Left lung (tissue), 14 donors: ENCODE measurements at regions of chr5 and their contacts with region 1.

Region 1: GRCh38 chr5:1167728-1168709 is 33.4 kb upstream of the SLC6A19 start:
- DNase-seq: peak; percentile 46 to 83 (median 68)
- ATAC-seq: peak; percentile 90
- H3K4me3 ChIP-seq: no peak overlapping the region
- H3K27ac ChIP-seq: no peak overlapping the region
- H3K4me1 ChIP-seq: peaks cover 0 to 10% of the 10 kb centered on the region in 2 donors
- H3K27me3 ChIP-seq: peaks cover 0 to 8% of the 10 kb centered on the region in 2 donors
- CTCF ChIP-seq: peak; percentile 63 to 67

Region 2: DNA sequence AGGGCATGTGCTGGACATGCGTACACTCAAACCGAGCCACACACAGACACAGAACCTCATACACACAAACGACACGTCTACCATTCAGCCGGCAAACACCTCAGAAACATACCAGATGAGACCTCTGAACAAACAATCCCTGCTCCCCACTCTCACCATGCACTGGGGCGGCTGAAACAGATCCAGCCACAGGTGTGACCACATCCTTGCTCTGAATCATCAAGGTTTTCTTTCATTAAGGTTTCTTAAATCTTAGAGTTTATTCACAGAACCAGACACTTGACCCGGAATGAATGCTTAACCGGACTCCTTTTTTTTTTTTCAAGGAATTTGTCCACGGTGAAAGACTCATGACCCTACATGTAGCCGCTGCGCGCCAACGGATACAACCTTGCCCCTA is 100.6 kb after region 1 on chr5:
- intact Hi-C with region 1: no loop called
- DNase-seq: no peak
- ATAC-seq: no peak
- H3K4me3 ChIP-seq: no peak overlapping the region
- H3K27ac ChIP-seq: no peak overlapping the region
- H3K4me1 ChIP-seq: no peaks in the 10 kb centered on the region
- H3K27me3 ChIP-seq: no peaks in the 10 kb centered on the region
- CTCF ChIP-seq: no peak

Region 3: DNA sequence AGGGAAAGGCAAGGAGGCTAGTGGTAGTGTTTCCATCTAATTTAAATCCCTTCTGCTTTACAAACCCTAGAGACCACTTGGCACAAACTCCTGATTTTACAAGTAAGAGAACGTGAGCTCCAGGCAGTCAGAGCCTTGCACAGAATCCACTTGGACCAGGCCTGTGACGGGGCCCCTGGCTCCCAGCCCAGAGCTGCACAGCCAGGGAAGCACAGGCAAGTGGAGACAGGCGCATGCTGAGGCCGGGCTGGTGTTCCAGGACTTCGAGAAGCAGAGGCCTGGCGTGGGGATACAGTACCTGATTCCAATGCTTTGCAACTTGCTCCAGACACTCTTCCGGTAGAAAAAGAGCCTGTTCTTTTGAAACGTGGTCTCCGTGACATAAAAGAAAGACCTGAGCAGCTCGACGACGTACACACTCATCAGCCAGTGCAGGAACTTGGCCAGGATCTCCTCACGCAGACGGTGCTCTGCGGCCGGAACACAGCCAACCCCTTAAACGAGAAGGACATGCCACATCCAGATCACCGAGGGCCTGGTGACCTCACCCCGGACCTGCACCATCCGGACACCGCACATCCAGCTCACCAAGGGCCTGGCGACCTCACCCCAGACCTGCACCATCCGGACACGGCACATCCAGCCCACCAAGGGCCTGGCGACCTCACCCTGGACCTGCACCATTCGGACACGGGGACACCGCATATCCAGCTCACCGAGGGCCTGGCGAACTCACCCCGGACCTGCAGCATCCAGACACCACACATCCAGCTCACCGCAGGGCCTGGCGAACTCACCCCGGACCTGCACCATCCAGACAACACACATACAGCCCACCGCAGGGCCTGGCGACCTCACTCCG is 114.3 kb after region 1 on chr5:
- intact Hi-C with region 1: no loop called
- DNase-seq: peak in 3 of 4 donors; percentile 31 to 54 (median 44)
- ATAC-seq: peak; percentile 33
- H3K4me3 ChIP-seq: no peak overlapping the region
- H3K27ac ChIP-seq: no peak overlapping the region
- H3K4me1 ChIP-seq: no peaks in the 10 kb centered on the region
- H3K27me3 ChIP-seq: no peaks in the 10 kb centered on the region
- CTCF ChIP-seq: no peak

Region 4: GRCh38 chr5:1641560-1642166 is 473.6 kb after region 1 on chr5:
- intact Hi-C with region 1: loop called in 1 of 2 experiments (anchors 5 kb)
- DNase-seq: peak; percentile 67 to 84 (median 82)
- ATAC-seq: peak; percentile 90
- H3K4me3 ChIP-seq: no peak overlapping the region
- H3K27ac ChIP-seq: no peak overlapping the region
- H3K4me1 ChIP-seq: peaks cover 4 to 5% of the 10 kb centered on the region in 2 donors
- H3K27me3 ChIP-seq: peaks cover 27 to 61% of the 10 kb centered on the region in 2 donors
- CTCF ChIP-seq: peak; percentile 68 to 79

Region 5: GRCh38 chr5:1652596-1653345 is 484.8 kb after region 1 on chr5:
- intact Hi-C with region 1: loop called in 1 of 2 experiments (anchors 10 kb)
- DNase-seq: peak in 2 of 4 donors; percentile 28 to 68
- ATAC-seq: no peak
- H3K4me3 ChIP-seq: no peak overlapping the region
- H3K27ac ChIP-seq: no peak overlapping the region
- H3K4me1 ChIP-seq: no peaks in the 10 kb centered on the region
- H3K27me3 ChIP-seq: peaks cover 16 to 89% of the 10 kb centered on the region in 2 donors
- CTCF ChIP-seq: no peak